Ovary (tissue), 10 donors: ENCODE measurements at regions of chr1 and their contacts with region 1.

Region 1: DNA sequence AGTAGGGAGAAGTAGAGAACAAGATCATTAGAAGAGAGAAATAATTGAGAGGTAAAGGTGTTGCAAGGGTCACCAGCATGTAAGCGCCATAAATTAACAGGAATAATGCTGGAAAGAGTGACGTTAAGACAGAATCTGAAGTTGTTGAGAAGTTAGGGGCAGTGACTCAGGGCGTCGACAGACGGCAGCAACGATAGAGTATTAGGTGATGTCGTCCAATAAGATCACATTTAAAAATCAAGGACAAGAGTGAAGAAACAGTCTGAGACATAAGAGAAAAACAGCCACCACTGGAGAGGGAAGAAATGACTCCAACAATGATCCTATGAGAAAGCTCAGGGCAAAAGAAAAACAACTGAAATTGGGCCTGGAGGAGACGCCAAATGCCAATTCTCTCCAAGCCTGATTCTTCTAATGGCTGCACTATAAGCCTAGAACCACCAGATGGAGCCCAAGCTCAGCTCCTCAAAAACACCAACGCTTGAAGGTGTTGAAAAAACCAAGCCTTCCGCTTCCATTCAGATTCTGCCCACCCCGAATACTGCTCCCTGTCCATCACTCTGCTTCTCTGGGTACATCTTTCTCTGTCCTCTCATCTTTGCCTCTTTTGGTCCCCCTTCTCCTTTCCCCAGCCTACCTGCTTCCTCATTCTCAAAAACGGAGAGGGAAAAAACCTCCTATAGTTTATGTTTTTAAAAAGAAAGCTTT is 70.0 kb downstream of the LUZP1 start:
- DNase-seq: peak; percentile 43 to 76 (median 59)
- H3K4me3 ChIP-seq: no peak overlapping the region
- H3K27ac ChIP-seq: no peak overlapping the region
- H3K4me1 ChIP-seq: peaks cover 11% of the 10 kb centered on the region
- H3K27me3 ChIP-seq: no peaks in the 10 kb centered on the region
- CTCF ChIP-seq: peak; percentile 87 to 95 (median 93)
- EP300 ChIP-seq: no peak
- POLR2A ChIP-seq: no peak

Region 2: DNA sequence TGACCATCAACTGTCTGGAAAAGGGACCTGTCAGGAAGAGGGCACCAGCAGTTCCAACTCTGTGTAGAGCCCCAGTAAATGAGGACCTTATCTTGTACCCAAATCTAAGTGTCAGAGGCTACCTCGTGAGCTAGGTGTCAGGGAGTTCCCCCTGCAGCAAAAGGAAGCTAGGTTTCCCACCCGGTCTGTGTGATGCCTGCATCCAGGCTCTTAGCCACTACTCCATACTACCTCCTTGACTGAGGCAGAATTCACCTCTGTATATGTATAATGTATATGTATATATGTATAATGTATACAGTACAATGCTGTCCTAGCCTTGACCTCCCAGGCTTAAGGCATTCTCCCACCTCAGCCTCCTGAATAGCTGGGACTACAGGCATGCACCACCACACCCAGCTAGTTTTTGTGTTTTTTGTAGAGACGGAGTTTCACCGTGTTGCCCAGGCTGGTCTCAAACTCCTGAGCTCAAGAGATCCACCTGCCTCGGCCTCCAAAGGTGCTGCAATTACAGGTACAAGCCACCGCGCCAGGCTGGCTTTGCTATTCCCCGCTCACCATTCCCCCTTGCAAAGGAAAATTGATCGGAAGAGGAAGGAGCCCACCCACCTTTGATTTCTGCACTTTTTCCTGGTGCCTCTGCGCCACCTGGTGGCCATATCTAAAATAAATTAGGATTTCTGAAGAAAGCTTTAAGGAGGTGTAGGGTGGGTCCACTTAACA is 85.8 kb after region 1 on chr1:
- intact Hi-C with region 1: loop called (anchors 2 to 5 kb)
- DNase-seq: peak; percentile 20 to 49 (median 40)
- H3K4me3 ChIP-seq: no peak overlapping the region
- H3K27ac ChIP-seq: no peak overlapping the region
- H3K4me1 ChIP-seq: no peaks in the 10 kb centered on the region
- H3K27me3 ChIP-seq: no peaks in the 10 kb centered on the region
- CTCF ChIP-seq: peak; percentile 88 to 96 (median 94)
- EP300 ChIP-seq: no peak
- POLR2A ChIP-seq: no peak